PC-3 (cell line): ENCODE measurements at regions of chr14 and their contacts with region 1.

Region 1: DNA sequence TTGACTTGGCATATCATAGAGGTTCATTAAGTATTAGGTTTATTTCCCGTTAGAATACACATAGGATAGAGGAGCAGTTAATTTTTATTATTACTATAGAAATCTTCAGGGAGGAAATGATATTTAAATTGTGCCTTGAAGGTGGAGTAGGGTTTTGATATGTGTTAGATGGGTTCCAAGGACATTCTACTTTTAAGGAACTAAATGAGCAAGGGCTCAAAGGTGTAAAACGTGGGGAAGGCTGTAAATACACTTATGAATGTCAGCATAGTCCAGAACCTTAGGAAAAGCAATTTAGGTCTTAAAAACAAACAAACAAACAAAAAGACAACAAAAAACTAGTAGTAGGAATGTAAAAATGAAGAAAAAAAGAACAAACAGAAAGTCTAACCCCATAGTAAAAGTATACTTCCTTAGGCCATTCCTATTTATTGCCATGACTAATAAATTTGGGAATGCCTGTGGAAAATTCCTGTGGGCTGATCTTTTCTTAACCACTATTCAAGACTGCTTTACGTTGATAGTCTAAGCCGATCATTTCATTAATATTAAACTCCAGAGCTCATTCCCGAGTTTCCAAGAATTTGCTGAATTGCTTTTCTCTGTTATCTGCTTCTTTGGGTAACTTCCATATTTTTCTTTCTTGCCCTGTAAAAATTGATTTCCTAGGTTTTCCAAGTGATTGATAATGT is 180.3 kb downstream of the RAD51B start:
- DNase-seq: peak; percentile 92
- ATAC-seq: peak; percentile 99
- H3K4me3 ChIP-seq: peak overlapping the region; percentile 60
- H3K27ac ChIP-seq: peak overlapping the region; percentile 64
- H3K4me1 ChIP-seq: peaks cover 20% of the 10 kb centered on the region
- H3K27me3 ChIP-seq: no peaks in the 10 kb centered on the region
- CTCF ChIP-seq: no peak

Region 2: DNA sequence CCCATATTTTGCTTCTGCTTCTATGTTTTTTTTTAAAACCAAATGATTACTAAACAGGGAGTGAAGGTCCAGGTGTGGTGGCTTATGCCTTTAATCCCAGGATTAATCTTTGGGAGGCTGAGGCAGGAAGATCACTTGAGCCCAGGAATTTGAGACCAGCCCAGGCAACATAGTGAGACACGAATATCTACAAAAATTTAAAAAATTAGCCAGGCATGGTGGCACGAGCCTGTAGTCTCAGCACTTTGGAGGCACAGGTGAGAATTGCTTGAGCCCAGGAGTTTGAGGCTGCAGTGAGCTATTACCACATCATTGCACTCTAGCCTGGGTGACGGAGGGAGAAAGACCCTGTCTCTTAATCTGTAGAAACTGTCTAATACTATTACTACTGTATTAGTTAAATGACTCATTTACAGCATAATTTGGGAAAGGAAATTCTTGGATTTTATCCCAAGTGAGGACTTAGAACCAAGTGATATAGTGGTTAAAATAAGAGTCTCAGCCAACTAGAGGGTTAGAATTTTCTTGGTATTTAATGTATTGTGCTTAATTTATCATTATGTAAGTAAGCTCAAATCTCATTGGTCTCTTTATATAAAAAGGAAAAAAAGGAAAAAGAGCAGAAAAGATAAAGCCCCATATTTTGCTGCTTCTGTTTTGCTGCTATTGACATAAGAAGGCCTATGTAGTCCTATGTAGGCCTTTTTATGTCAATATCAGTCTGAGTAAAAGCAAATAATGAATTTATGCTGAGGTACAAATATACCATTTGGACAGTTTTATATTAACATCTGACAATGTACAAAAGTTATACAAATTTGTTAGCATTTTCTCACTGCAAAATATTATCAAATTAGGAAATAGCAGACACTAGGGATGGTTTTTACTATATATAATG is 16.9 kb before region 1 on chr14:
- CTCF ChIA-PET with region 1: no interaction called
- POLR2A ChIA-PET with region 1: no interaction called
- intact Hi-C with region 1: loop called (anchors 2 kb)
- DNase-seq: peak; percentile 10
- ATAC-seq: peak; percentile 94
- H3K4me3 ChIP-seq: no peak overlapping the region
- H3K27ac ChIP-seq: no peak overlapping the region
- H3K4me1 ChIP-seq: 0 out of 2 replicates have a peak, but pooled peaks cover 5% of the 10 kb centered on the region
- H3K27me3 ChIP-seq: no peaks in the 10 kb centered on the region
- CTCF ChIP-seq: no peak

Region 3: GRCh38 chr14:68016255-68016914 is 16.5 kb after region 1 on chr14:
- CTCF ChIA-PET with region 1: no interaction called
- POLR2A ChIA-PET with region 1: interaction called, 3 read pairs
- intact Hi-C with region 1: loop called (anchors 1 kb)
- DNase-seq: no peak
- ATAC-seq: peak; percentile 44
- H3K4me3 ChIP-seq: no peak overlapping the region
- H3K27ac ChIP-seq: no peak overlapping the region
- H3K4me1 ChIP-seq: peaks cover 28% of the 10 kb centered on the region
- H3K27me3 ChIP-seq: no peaks in the 10 kb centered on the region
- CTCF ChIP-seq: no peak

Region 4: DNA sequence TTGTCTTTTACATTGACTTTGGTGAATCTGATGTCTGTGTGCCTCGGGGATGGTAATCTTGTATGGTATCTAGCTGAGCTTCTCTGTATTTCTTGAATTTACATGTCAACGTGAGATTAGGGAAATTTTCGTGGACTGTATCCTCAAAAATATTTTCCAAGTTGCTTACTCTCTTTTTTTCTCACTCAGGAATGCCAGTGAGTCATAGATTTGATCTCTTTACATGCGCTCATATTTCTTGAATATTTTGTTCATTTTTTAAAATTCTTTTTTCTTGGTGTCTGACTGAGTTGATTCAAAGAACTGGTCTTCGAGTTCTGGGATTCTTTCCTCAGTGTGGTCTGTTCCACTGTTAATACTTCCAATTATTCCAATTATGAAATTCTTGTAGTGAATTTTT is 27.4 kb after region 1 on chr14:
- CTCF ChIA-PET with region 1: no interaction called
- POLR2A ChIA-PET with region 1: no interaction called
- intact Hi-C with region 1: no loop called
- DNase-seq: peak; percentile 25
- ATAC-seq: no peak
- H3K4me3 ChIP-seq: no peak overlapping the region
- H3K27ac ChIP-seq: no peak overlapping the region
- H3K4me1 ChIP-seq: peaks cover 6% of the 10 kb centered on the region; the same call in 1 of the 2 replicates
- H3K27me3 ChIP-seq: no peaks in the 10 kb centered on the region
- CTCF ChIP-seq: no peak

Region 5: DNA sequence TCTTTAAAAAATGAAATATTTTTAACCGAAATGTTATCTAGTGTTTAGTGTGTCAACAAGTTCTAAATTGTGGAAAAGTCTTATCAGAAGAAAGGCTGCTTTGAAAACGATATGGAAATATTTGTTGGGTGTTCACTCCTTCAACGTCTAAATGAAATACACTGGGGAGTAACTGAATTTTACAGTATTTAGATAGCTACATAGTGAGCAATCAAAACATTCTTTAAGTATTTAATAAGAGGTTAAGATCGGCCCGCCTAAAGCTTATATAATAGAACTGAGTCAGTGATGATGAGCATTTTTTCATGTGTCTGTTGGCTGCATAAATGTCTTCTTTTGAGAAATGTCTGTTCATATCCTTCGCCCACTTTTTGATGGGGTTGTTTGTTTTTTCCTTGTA is 48.1 kb after region 1 on chr14:
- CTCF ChIA-PET with region 1: no interaction called
- POLR2A ChIA-PET with region 1: no interaction called
- intact Hi-C with region 1: loop called (anchors 5 kb)
- DNase-seq: peak; percentile 82
- ATAC-seq: peak; percentile 100
- H3K4me3 ChIP-seq: peak overlapping the region; percentile 33
- H3K27ac ChIP-seq: peak overlapping the region; percentile 21
- H3K4me1 ChIP-seq: peaks cover 9% of the 10 kb centered on the region
- H3K27me3 ChIP-seq: no peaks in the 10 kb centered on the region
- CTCF ChIP-seq: no peak

Region 6: GRCh38 chr14:68065322-68065721 is 65.5 kb after region 1 on chr14:
- CTCF ChIA-PET with region 1: no interaction called
- POLR2A ChIA-PET with region 1: no interaction called
- intact Hi-C with region 1: no loop called
- DNase-seq: no peak
- ATAC-seq: no peak
- H3K4me3 ChIP-seq: no peak overlapping the region
- H3K27ac ChIP-seq: no peak overlapping the region
- H3K4me1 ChIP-seq: no peaks in the 10 kb centered on the region
- H3K27me3 ChIP-seq: no peaks in the 10 kb centered on the region
- CTCF ChIP-seq: no peak

Region 7: GRCh38 chr14:68157971-68158371 is 158.1 kb after region 1 on chr14:
- CTCF ChIA-PET with region 1: no interaction called
- POLR2A ChIA-PET with region 1: no interaction called
- intact Hi-C with region 1: loop called (anchors 5 kb)
- DNase-seq: peak; percentile 61
- ATAC-seq: peak; percentile 78
- H3K4me3 ChIP-seq: no peak overlapping the region
- H3K27ac ChIP-seq: peak overlapping the region; percentile 66
- H3K4me1 ChIP-seq: peaks cover 17% of the 10 kb centered on the region
- H3K27me3 ChIP-seq: no peaks in the 10 kb centered on the region
- CTCF ChIP-seq: no peak